ENCODE measurements at regions of chr9 and their contacts with region 1.

Region 1: GRCh38 chr9:108551030-108551838 is 304.6 kb downstream of the ACTL7B start:
- DNase-seq: no peak
- H3K4me3 ChIP-seq: no peak overlapping the region
- H3K27ac ChIP-seq: peak overlapping the region; percentile 51 to 74
- H3K4me1 ChIP-seq: peaks cover 0 to 8% of the 10 kb centered on the region in 2 donors
- H3K27me3 ChIP-seq: no peaks in the 10 kb centered on the region
- CTCF ChIP-seq: no peak
- POLR2A ChIP-seq: no peak

Region 2: GRCh38 chr9:108933718-108934322 is 382.6 kb after region 1 on chr9 and contains the start of gene ELP1:
- intact Hi-C with region 1: loop called (anchors 5 kb)
- DNase-seq: peak; percentile 85 to 88
- H3K4me3 ChIP-seq: peak within 1 kb of the TSS; percentile 75 to 85 (median 83)
- H3K27ac ChIP-seq: peak within 1 kb of the TSS; percentile 95
- H3K4me1 ChIP-seq: peaks cover 0 to 10% of the 10 kb centered on the region in 2 donors
- H3K27me3 ChIP-seq: no peaks in the 10 kb centered on the region
- CTCF ChIP-seq: no peak
- POLR2A ChIP-seq: peak; percentile 20
- total RNA-seq, gene ELP1: 18.2 to 27.8 (median 22.6) TPM

Measured in breast epithelium (tissue), 4 donors.